A549 (cell line): ENCODE measurements at regions of chr19 and their contacts with region 1.

Region 1: GRCh38 chr19:38683393-38684080 is 36.1 kb downstream of the ACTN4 start:
- DNase-seq: peak; percentile 100
- ATAC-seq: peak; percentile 68 to 74
- H3K4me3 ChIP-seq: peak overlapping the region; percentile 6; the same call in 2 of the 3 replicates
- H3K27ac ChIP-seq: peak overlapping the region; percentile 93 to 94
- H3K4me1 ChIP-seq: peaks cover 90% of the 10 kb centered on the region
- CTCF ChIP-seq: no peak
- EP300 ChIP-seq: peak; percentile 93 to 95; a peak in 4 of 5 replicates
- POLR2A ChIP-seq: no peak; the same call in 1 of the 2 replicates
- RAD21 ChIP-seq: peak in 1 of 2 experiments; percentile 37

Region 2: GRCh38 chr19:38618590-38619360 is 64.8 kb before region 1 on chr19 and contains the start of gene EIF3K:
- CTCF ChIA-PET with region 1: no interaction called
- POLR2A ChIA-PET with region 1: interaction called, 12 read pairs
- DNase-seq: peak; percentile 100
- ATAC-seq: peak; percentile 87 to 93
- H3K4me3 ChIP-seq: peak within 1 kb of the TSS; percentile 86
- H3K27ac ChIP-seq: peak within 1 kb of the TSS; percentile 84 to 87
- H3K4me1 ChIP-seq: peaks cover 14% of the 10 kb centered on the region
- CTCF ChIP-seq: no peak
- EP300 ChIP-seq: no peak
- POLR2A ChIP-seq: peak; percentile 85
- RAD21 ChIP-seq: peak in 1 of 2 experiments; percentile 10; a peak in 1 of 5 replicates
- polyA plus RNA-seq, gene EIF3K: 419 and 491 TPM in 2 replicates

Region 3: DNA sequence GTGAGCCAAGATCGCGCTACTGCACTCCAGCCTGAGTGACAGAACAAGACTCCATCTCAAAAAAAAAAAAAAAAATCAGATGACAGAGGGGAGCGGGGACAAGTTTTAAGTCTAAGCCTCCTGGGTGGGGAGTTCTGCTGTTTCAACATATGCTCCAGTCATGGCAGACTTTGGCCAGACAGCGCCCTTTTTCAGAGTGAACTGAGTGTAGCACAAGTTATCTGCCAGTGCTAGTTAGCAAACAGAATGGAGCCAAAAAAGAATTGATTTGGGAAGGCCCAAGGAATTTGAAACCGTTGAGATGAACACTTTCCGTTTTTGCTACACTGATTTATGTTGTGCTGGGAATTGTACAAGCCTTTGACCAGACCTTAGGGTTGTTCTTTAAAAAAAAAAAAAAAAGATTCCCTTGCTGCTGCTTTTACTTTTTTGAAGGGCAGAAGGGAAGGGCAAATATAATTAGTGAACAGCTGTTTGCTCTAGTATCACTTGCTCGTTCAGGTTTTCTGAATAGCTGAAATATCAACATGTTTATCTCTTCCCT is 30.4 kb before region 1 on chr19:
- CTCF ChIA-PET with region 1: interaction called, 336 read pairs
- POLR2A ChIA-PET with region 1: interaction called, 61 read pairs
- DNase-seq: peak in 1 of 2 experiments; percentile 82
- ATAC-seq: peak in 1 of 2 experiments; percentile 6; a peak in 2 of 6 replicates
- H3K4me3 ChIP-seq: peak overlapping the region; percentile 85; the same call in 2 of the 3 replicates
- H3K27ac ChIP-seq: peak overlapping the region; percentile 87 to 91
- H3K4me1 ChIP-seq: peaks cover 78% of the 10 kb centered on the region
- CTCF ChIP-seq: no peak
- EP300 ChIP-seq: no peak
- POLR2A ChIP-seq: no peak
- RAD21 ChIP-seq: 0 out of 5 replicates have a peak, but pooled peaks of 1 of the 2 experiments have one; percentile 7

Region 4: DNA sequence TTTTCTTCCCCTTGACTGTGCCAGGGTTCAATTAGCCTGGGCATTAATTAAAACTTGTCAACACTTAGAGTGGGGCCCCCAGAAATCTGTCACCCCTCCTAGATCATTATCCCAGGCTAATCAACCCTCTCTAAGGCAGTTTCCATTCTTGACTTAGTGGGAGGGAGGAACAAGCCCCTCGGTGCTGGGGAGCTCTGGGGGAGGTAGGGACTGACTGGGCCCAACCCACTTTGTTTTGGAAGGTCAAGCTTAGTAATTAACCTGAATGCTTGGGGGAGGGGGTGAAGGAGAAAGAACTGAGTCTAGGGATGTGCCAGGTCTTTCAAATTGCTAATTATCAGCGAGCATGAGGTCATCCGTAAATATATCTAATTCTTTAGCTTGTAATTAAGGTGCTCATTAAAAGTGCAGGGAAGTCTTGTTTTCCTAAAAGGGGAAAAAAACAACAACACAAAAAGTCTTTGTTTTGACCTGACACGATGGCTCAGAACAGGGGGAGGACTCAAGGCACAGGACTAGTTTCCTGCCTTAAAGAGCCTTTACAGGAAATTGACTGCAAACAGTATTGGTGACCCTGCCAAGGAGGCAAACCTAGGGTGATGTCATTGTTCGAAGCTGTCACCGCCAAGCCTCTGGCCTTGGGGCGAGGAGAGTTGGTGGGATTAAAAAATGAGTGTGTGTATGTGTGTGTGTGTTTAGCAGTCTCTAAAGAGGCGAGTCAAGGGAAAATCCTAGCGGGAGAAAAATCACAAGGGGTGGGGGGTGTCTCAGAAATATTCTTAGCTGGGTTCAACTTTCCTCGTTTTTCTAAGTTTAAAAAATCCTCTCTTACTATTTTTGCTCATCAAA is 16.6 kb before region 1 on chr19:
- CTCF ChIA-PET with region 1: interaction called, 336 read pairs
- POLR2A ChIA-PET with region 1: interaction called, 9 read pairs
- DNase-seq: peak in 1 of 2 experiments; percentile 87
- ATAC-seq: peak; percentile 19 to 30; a peak in 4 of 6 replicates
- H3K4me3 ChIP-seq: peak overlapping the region; percentile 13; the same call in 2 of the 3 replicates
- H3K27ac ChIP-seq: peak overlapping the region; percentile 75 to 91
- H3K4me1 ChIP-seq: peaks cover 100% of the 10 kb centered on the region
- CTCF ChIP-seq: no peak
- EP300 ChIP-seq: no peak
- POLR2A ChIP-seq: no peak
- RAD21 ChIP-seq: no peak

Region 5: DNA sequence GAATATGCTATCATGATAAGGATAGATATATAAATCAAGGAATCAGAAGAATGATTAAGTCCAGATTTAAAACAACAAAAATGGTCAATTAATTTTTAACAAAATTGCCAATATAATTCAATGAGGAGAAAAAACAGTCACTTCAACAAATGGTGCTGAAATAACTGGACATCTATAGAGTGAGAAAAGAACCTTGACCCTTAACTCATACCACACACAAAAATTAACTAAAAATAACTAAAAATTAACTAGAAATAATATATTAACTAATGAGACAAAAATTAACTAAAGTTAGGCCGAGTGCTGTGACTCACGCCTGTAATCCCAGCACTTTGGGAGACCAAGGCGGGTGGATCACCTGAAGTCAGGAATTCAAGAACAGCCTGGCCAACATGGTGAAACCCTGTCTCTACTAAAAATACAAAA is 80.3 kb after region 1 on chr19:
- CTCF ChIA-PET with region 1: no interaction called
- POLR2A ChIA-PET with region 1: no interaction called
- DNase-seq: no peak
- ATAC-seq: peak; percentile 57 to 58; a peak in 5 of 6 replicates
- H3K4me3 ChIP-seq: no peak overlapping the region
- H3K27ac ChIP-seq: peak overlapping the region; percentile 53 to 85
- H3K4me1 ChIP-seq: peaks cover 17% of the 10 kb centered on the region
- CTCF ChIP-seq: no peak
- EP300 ChIP-seq: no peak
- POLR2A ChIP-seq: no peak
- RAD21 ChIP-seq: no peak

Region 6: DNA sequence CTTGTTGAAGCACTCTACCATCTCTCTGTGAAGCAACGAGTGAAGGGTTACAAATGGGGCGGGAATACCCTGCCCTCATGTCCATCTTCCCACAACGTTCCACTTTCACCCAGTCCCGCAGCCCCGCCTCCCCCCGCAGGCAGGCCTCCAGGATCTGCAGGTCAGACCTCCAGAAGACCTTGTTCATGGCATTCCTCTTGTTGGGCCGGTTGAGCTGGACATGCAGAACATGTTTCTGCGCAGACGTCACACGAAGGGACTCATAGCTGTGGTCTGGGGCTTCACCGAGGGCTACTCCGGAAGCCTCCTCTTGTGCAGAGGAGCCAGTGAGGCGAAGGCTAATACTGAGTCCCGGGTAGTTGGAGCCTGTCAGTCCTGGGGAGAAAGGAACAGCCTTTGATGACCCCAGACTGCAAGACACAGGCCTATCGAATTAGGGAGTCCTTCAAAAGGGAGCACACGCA is 147.6 kb after region 1 on chr19:
- CTCF ChIA-PET with region 1: no interaction called
- POLR2A ChIA-PET with region 1: interaction called, 12 read pairs
- DNase-seq: peak; percentile 73 to 78
- ATAC-seq: peak; percentile 57 to 58
- H3K4me3 ChIP-seq: peak overlapping the region; percentile 55
- H3K27ac ChIP-seq: peak overlapping the region; percentile 88
- H3K4me1 ChIP-seq: peaks cover 49% of the 10 kb centered on the region
- CTCF ChIP-seq: no peak
- EP300 ChIP-seq: no peak
- POLR2A ChIP-seq: no peak
- RAD21 ChIP-seq: no peak